Cardiac septum (tissue), 1 donor: ENCODE measurements at regions of chr6 and their contacts with region 1.

Region 1: GRCh38 chr6:89080542-89081422 is at the start of gene PNRC1:
- DNase-seq: peak; percentile 100
- total RNA-seq, gene PNRC1: 211 TPM

Region 2: GRCh38 chr6:89022798-89023197 is 58.0 kb before region 1 on chr6:
- intact Hi-C with region 1: loop called (anchors 5 kb)
- DNase-seq: no peak

Region 3: GRCh38 chr6:89048985-89049384 is 31.8 kb before region 1 on chr6:
- intact Hi-C with region 1: no loop called
- DNase-seq: no peak

Region 4: GRCh38 chr6:89117211-89118108 is 36.7 kb after region 1 on chr6 and contains the start of gene SRSF12:
- intact Hi-C with region 1: loop called (anchors 2 kb)
- DNase-seq: no peak
- total RNA-seq, gene SRSF12: 0.40 TPM

Region 5: DNA sequence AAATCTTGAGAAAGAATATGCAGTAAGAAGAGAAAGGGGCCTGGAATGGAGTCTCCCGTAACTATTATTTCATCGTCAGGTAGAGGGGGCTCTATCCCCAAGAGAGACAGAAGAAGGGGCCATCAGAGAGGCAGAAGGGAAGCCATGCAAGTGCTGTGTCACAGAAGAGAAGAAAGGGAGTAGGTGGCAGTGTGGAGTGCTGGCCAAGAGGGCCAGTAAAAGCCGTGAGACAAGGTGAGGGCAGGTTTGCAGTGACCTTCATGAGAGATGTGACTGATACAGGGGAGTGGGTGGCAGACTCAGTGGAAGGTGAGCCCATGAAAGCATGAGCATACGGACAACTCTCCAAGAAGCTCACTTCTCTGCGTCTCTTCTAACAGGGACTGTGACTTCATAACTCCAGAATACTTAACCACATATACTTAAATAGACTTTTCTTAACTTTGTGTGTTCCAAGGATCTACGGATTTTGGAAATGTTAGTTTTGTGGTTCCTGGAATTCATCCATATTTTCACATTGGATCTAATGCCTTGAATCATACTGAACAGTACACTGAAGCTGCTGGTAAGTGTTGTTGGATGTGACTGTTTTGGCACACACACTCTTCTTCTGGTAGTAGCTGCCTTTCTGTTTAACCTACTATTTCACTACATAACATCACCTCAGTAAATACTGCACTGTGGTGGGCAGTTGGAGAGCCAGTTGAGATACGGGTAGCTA is 80.7 kb after region 1 on chr6:
- intact Hi-C with region 1: loop called (anchors 5 kb)
- DNase-seq: no peak